Vagina (tissue), 2 donors: ENCODE measurements at regions of chr1 and their contacts with region 1.

Region 1: GRCh38 chr1:33367485-33368405 is 46.8 kb upstream of the A3GALT2 start:
- DNase-seq: no peak
- H3K4me3 ChIP-seq: no peak overlapping the region
- H3K27ac ChIP-seq: peak overlapping the region; percentile 20
- H3K4me1 ChIP-seq: peaks cover 50% of the 10 kb centered on the region
- H3K27me3 ChIP-seq: no peaks in the 10 kb centered on the region
- CTCF ChIP-seq: peak; percentile 95 to 99 (median 95)
- POLR2A ChIP-seq: no peak

Region 2: GRCh38 chr1:33295450-33296081 is 72.2 kb before region 1 on chr1:
- intact Hi-C with region 1: loop called (anchors 5 kb)
- DNase-seq: no peak
- H3K4me3 ChIP-seq: no peak overlapping the region
- H3K27ac ChIP-seq: peak overlapping the region; percentile 43
- H3K4me1 ChIP-seq: peaks cover 30% of the 10 kb centered on the region
- H3K27me3 ChIP-seq: no peaks in the 10 kb centered on the region
- CTCF ChIP-seq: peak; percentile 98
- POLR2A ChIP-seq: no peak

Region 3: DNA sequence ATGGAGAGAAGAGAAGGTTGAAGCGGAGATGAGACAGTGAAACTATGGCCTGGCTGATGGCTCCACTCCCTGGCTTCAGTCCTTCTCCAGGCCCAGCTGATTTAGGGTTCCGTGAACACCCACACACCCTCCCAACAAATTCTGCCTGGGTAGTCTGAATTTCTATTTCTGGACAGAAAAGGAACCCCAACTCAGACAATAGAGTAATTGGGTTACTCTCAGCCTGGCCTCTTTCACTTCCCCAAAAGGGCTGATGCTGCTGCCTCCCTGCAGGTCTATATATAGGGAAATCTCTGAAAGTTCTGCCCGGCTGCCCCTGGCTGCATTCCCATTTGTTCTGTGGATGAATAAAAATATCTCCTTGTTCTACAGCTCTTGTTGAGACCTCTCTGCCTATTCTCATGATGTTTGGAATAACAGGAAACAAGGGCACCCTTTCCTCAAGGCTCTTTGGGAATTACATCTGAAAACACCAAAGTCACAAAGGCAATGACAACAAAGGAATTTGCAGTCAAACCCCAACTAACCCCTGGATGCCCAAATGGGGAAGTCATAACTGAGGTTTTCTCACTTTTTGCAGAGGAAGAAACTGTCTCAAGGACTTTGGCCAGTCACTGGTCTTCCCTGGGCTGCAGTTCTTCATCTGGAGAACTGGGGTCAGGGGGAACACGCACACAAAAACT is 93.3 kb after region 1 on chr1:
- intact Hi-C with region 1: loop called (anchors 10 kb)
- DNase-seq: peak in 1 of 2 donors; percentile 22
- H3K4me3 ChIP-seq: no peak overlapping the region
- H3K27ac ChIP-seq: peak overlapping the region; percentile 13
- H3K4me1 ChIP-seq: peaks cover 8% of the 10 kb centered on the region
- H3K27me3 ChIP-seq: no peaks in the 10 kb centered on the region
- CTCF ChIP-seq: no peak
- POLR2A ChIP-seq: no peak